ENCODE measurements at regions of chr6 and their contacts with region 1.

Region 1: DNA sequence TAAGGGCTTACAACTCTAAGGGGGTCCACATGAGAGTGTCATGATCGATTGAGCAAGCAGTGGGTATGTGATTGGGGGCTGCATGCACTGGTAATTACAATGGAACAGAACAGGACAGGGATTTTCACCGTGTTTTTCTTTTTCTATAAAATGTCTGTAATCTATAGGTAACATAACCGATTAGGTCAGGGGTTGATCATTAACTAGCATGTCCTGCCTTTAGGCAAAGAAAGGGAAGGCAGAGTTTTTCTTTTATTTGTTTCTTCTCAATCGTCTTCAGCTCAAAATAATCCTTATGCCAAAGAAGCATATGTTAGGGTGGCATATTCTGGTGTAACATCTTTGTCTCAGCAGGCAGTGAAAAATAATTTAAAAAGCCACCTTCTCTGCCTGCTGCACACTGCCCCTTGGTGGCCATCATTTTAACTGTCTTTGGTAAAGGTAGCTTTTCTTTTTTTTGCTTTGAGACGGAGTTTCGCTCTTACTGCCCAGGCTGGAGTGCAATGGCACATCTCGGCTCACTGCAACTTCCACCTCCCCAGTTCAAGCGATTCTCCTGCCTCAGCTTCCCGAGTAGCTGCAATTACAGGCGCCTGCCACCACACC is 9.7 kb upstream of the CEP43 start:
- DNase-seq: peak; percentile 11
- H3K4me3 ChIP-seq: no peak overlapping the region
- H3K27ac ChIP-seq: no peak overlapping the region
- H3K4me1 ChIP-seq: peaks cover 5% of the 10 kb centered on the region
- H3K27me3 ChIP-seq: no peaks in the 10 kb centered on the region
- CTCF ChIP-seq: peak; percentile 31 to 55

Region 2: GRCh38 chr6:166786704-166787293 is 202.7 kb before region 1 on chr6:
- CTCF ChIA-PET with region 1: no interaction called
- dilution Hi-C with region 1: no loop called
- in situ Hi-C with region 1: loop called in 1 of 2 experiments (anchors 25 kb)
- intact Hi-C with region 1: loop called (anchors 1 kb)
- DNase-seq: peak; percentile 38
- H3K4me3 ChIP-seq: no peak overlapping the region
- H3K27ac ChIP-seq: no peak overlapping the region
- H3K4me1 ChIP-seq: no peaks in the 10 kb centered on the region
- H3K27me3 ChIP-seq: no peaks in the 10 kb centered on the region
- CTCF ChIP-seq: peak; percentile 57 to 71

Region 3: DNA sequence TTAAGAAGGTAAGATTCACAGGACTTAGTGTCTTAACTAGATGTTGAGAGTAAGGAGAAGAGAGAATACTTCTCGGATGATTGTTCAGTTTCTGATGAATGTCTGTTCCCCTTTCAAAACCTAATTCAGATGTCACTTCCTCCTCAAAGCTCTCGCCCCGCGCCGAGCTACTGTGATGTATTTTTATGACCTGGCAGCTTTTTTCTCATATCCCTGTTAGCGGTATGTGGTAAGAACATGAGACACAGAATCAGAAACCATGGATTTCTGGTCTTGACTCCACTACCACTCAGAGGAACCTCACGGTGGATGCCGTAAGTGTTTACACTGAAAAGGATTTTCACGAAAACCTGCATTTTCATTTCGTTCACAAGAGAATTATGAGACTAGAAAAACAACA is 58.0 kb after region 1 on chr6:
- CTCF ChIA-PET with region 1: no interaction called
- dilution Hi-C with region 1: no loop called
- in situ Hi-C with region 1: no loop called
- intact Hi-C with region 1: no loop called
- DNase-seq: no peak
- H3K4me3 ChIP-seq: no peak overlapping the region
- H3K27ac ChIP-seq: no peak overlapping the region
- H3K4me1 ChIP-seq: no peaks in the 10 kb centered on the region
- H3K27me3 ChIP-seq: no peaks in the 10 kb centered on the region
- CTCF ChIP-seq: no peak

Region 4: GRCh38 chr6:167668019-167668753 is 678.7 kb after region 1 on chr6:
- CTCF ChIA-PET with region 1: no interaction called
- dilution Hi-C with region 1: no loop called
- in situ Hi-C with region 1: no loop called
- intact Hi-C with region 1: no loop called
- DNase-seq: no peak
- H3K4me3 ChIP-seq: no peak overlapping the region
- H3K27ac ChIP-seq: no peak overlapping the region
- H3K4me1 ChIP-seq: no peaks in the 10 kb centered on the region
- H3K27me3 ChIP-seq: no peaks in the 10 kb centered on the region
- CTCF ChIP-seq: no peak

Measured in mammary epithelial cell (primary cell).